IMR-90 (cell line): ENCODE measurements at regions of chr12 and their contacts with region 1.

Region 1: GRCh38 chr12:123713398-123713797 is 1.2 kb downstream of the ATP6V0A2 start:
- DNase-seq: peak; percentile 10
- ATAC-seq: no peak
- H3K4me3 ChIP-seq: peak overlapping the region; percentile 93
- H3K27ac ChIP-seq: no peak overlapping the region
- H3K4me1 ChIP-seq: peaks cover 5% of the 10 kb centered on the region
- H3K27me3 ChIP-seq: no peaks in the 10 kb centered on the region
- CTCF ChIP-seq: no peak
- POLR2A ChIP-seq: no peak
- RAD21 ChIP-seq: no peak

Region 2: GRCh38 chr12:123614531-123614930 is 98.9 kb before region 1 on chr12:
- CTCF ChIA-PET with region 1: interaction called, 10 read pairs
- POLR2A ChIA-PET with region 1: no interaction called
- dilution Hi-C with region 1: no loop called
- in situ Hi-C with region 1: no loop called
- intact Hi-C with region 1: no loop called
- DNase-seq: peak; percentile 32
- ATAC-seq: peak; percentile 67; the same call in 1 of the 2 replicates
- H3K4me3 ChIP-seq: no peak overlapping the region
- H3K27ac ChIP-seq: no peak overlapping the region
- H3K4me1 ChIP-seq: 0 out of 2 replicates have a peak, but pooled peaks cover 3% of the 10 kb centered on the region
- H3K27me3 ChIP-seq: no peaks in the 10 kb centered on the region
- CTCF ChIP-seq: no peak
- POLR2A ChIP-seq: no peak
- RAD21 ChIP-seq: no peak

Region 3: GRCh38 chr12:123655420-123655819 is 58.0 kb before region 1 on chr12:
- CTCF ChIA-PET with region 1: no interaction called
- POLR2A ChIA-PET with region 1: interaction called, 11 read pairs
- dilution Hi-C with region 1: no loop called
- in situ Hi-C with region 1: no loop called
- intact Hi-C with region 1: no loop called
- DNase-seq: no peak
- ATAC-seq: no peak
- H3K4me3 ChIP-seq: no peak overlapping the region
- H3K27ac ChIP-seq: no peak overlapping the region
- H3K4me1 ChIP-seq: peaks cover 3% of the 10 kb centered on the region
- H3K27me3 ChIP-seq: no peaks in the 10 kb centered on the region
- CTCF ChIP-seq: no peak
- POLR2A ChIP-seq: no peak
- RAD21 ChIP-seq: no peak